Activated CD4-positive, alpha-beta memory T cell treated with anti-CD3 and anti-CD28 coated beads, Interleukin-2, amount 10 ng/mL, durations not matched to agents 7 days and 5 days (primary cell): ENCODE measurements at regions of chr17 and their contacts with region 1.

Region 1: DNA sequence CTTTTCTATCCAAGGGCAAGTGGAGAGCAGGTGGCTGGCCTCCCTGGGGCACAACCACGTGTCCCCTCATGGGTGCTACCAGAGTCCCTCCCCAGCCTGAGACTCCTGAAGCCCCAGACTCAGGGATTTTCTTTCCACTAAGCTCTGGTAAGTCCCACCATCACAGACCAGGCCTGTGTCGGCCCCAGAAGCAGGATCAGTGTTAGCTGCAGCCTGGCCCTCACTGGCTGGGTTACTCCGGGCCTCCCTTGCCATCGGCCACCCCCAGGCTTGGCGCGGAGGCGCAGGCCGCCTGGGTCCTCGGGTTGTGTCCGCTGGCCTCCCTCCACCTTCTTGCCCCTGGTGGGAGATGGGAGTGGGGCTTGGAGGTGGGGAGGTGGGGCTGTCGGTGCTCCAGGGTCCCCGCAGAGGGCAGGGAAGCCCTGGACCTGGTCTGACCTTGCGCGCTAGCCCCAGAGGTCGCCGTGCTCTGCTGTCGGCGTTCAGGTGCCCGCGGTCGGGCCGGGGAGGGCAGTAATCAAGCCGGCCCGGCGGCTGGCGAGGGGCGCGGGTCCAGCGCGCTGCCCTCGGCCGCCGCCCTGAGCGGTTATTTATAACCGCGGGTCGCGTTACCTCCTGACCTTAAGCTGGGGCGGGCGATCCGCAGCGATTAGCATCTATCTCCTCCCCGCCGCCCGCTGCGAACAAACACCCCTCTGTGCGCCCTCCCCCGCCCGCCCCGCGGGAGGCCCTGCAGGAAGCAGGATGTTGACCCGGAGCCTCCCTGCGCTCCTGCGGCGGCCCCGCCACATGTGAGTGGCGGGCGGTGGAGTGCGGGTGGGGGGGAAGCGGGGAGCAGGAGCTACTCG is 78.1 kb upstream of the TOB1 start:
- DNase-seq: peak; percentile 90
- H3K4me3 Mint-ChIP-seq: peak overlapping the region; percentile 74
- H3K27ac Mint-ChIP-seq: peak overlapping the region; percentile 75
- H3K4me1 Mint-ChIP-seq: peaks cover 42% of the 10 kb centered on the region
- H3K27me3 Mint-ChIP-seq: no peaks in the 10 kb centered on the region

Region 2: DNA sequence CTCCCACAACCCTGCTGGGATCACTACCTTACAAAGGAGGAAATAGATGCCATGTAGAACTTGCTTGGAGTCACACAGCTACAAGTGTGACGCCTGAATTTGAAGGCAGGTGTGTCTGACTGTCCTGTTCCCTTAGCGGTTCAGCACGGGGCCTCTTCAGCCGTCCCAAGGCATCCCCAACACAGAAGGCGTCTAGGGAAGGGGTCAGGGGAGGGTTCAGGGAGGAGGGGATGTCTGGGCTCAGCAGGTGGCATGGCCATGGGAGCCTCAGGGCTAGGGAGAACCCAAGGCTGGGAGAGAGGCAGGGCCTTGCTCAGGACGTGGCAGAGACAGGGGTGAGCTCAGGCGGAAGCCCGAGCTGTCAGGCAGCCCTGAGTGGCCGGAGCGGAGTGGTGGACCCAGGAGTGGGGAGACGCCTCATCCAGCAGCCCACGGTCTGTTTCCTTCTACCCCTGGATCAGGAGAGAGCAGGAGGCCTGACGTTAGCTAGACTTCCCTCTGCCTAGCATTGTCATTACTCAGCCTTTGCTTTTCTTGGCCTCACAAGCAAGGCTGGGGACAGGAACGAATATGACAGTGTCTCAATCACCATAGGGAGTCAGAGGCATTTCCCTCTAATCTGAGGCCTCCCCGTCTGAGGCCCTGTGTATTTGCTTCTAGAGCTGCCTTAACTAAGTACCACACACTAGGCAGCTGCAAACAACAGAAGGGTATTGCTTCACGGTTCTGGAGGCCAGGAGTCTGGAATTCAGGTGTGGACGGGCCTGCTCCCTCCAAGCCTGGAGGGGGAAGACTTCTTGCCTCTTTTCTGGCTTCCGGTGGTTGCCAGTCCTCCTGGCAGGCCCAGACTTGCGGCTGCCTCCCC is 145.6 kb before region 1 on chr17:
- CTCF ChIA-PET with region 1: no interaction called
- POLR2A ChIA-PET with region 1: no interaction called
- DNase-seq: no peak
- H3K4me3 Mint-ChIP-seq: no peak overlapping the region
- H3K27ac Mint-ChIP-seq: no peak overlapping the region
- H3K4me1 Mint-ChIP-seq: no peaks in the 10 kb centered on the region
- H3K27me3 Mint-ChIP-seq: peaks cover 5% of the 10 kb centered on the region

Region 3: GRCh38 chr17:50872710-50873424 is 71.4 kb before region 1 on chr17:
- CTCF ChIA-PET with region 1: interaction called, 15 read pairs
- POLR2A ChIA-PET with region 1: interaction called, 457 read pairs
- DNase-seq: peak; percentile 63
- H3K4me3 Mint-ChIP-seq: no peak overlapping the region
- H3K27ac Mint-ChIP-seq: peak overlapping the region; percentile 51
- H3K4me1 Mint-ChIP-seq: peaks cover 54% of the 10 kb centered on the region
- H3K27me3 Mint-ChIP-seq: peaks cover 12% of the 10 kb centered on the region

Region 4: DNA sequence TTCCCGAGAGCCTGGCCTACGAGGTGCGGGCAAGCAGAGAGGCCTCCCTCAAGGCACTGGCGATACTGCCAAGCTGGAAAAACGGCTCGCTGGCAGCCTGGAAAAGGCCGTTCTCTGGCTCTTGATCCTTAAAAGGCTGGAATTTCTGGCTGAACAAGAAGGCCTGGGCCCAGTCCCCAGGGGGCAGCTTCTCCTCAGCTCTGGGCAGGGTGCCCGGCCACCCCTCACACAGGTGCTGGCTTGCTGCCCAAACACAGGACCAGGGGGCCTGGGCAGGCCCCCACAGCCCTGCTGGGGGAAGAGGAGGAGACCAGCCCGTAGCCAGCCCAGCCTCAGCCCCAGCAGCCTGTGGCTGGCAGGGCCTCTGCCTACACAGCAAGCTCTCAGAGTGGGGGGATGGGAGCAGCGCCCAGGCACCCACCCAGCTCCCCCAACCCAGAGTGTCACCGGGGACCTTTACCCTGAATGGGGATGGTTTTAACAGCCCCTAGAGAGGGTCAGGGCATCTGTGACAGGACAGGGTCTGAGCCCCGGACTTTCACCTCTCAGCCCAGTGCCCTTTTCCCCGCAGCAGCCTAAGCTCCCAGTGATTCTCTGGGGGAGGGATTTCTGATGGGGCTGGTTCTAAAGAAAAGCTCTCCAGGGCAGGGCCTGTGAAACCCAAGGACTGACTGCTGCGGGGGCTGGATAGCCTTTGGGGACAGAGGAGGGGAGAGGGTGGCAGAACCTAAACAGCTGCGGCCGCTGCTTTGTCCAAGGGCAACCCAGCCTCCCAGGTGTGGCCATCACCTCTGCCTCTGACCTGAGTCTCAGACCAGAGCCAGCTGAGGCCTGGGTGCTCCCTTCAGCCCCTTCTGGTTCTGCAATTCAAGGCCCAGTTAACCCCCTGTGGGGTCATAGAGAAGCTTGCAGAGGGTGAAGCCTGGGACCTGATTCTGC is 39.5 kb before region 1 on chr17:
- CTCF ChIA-PET with region 1: interaction called, 4 read pairs
- POLR2A ChIA-PET with region 1: interaction called, 21 read pairs
- DNase-seq: no peak
- H3K4me3 Mint-ChIP-seq: no peak overlapping the region
- H3K27ac Mint-ChIP-seq: peak overlapping the region; percentile 85
- H3K4me1 Mint-ChIP-seq: peaks cover 70% of the 10 kb centered on the region
- H3K27me3 Mint-ChIP-seq: no peaks in the 10 kb centered on the region

Region 5: DNA sequence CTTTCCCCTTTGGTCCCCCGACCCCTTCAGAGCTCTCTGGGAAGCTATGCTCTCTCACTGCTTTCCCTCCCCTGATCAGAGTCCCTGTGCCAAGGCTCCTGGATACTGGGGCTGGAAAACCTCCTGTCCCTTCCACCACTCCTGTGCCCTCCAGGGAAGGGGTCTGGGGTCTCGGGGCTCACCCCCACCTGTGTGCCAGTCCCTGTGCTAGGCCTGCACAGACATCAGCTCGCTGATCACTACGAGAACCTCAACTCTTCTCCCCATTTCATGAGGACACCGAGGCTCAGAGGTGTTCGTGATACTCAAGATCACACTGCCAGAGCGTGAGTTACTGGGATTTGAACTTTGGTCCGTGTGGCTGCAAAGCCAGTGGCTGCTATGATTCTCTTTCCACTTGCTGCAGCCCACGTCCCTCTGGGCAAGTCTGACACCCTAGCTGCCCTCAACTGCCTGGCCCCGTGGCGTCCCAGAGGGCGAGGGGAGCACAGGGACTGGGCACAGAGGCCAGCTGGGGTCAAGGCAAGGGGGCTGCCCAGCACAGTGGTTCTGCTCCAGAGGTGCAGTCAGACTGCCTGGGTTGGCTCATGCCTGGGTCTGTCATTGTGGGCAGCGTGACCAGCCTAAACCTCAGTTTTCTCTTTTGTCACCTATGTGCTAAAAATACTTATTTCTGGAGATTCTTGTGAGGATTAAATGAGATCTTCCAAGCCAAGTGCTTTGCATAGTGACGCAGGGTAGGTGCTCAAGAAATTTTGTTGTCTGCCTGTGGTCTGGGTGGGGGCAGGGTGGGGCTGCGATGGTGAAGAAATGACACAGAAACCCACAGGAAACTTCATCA is 34.3 kb before region 1 on chr17:
- CTCF ChIA-PET with region 1: interaction called, 5 read pairs
- POLR2A ChIA-PET with region 1: interaction called, 21 read pairs
- DNase-seq: peak; percentile 90
- H3K4me3 Mint-ChIP-seq: peak overlapping the region; percentile 19
- H3K27ac Mint-ChIP-seq: peak overlapping the region; percentile 97
- H3K4me1 Mint-ChIP-seq: peaks cover 79% of the 10 kb centered on the region
- H3K27me3 Mint-ChIP-seq: no peaks in the 10 kb centered on the region

Region 6: GRCh38 chr17:50931144-50931908 is 13.0 kb before region 1 on chr17:
- CTCF ChIA-PET with region 1: interaction called, 8 read pairs
- POLR2A ChIA-PET with region 1: interaction called, 16 read pairs
- DNase-seq: peak; percentile 53
- H3K4me3 Mint-ChIP-seq: peak overlapping the region; percentile 68
- H3K27ac Mint-ChIP-seq: peak overlapping the region; percentile 47
- H3K4me1 Mint-ChIP-seq: peaks cover 39% of the 10 kb centered on the region
- H3K27me3 Mint-ChIP-seq: peaks cover 23% of the 10 kb centered on the region

Region 7: GRCh38 chr17:51056813-51057510 is 112.7 kb after region 1 on chr17:
- CTCF ChIA-PET with region 1: no interaction called
- POLR2A ChIA-PET with region 1: no interaction called
- DNase-seq: peak; percentile 20
- H3K4me3 Mint-ChIP-seq: no peak overlapping the region
- H3K27ac Mint-ChIP-seq: no peak overlapping the region
- H3K4me1 Mint-ChIP-seq: no peaks in the 10 kb centered on the region
- H3K27me3 Mint-ChIP-seq: no peaks in the 10 kb centered on the region

Region 8: GRCh38 chr17:51132964-51133319 is 188.7 kb after region 1 on chr17:
- CTCF ChIA-PET with region 1: no interaction called
- POLR2A ChIA-PET with region 1: no interaction called
- DNase-seq: no peak
- H3K4me3 Mint-ChIP-seq: no peak overlapping the region
- H3K27ac Mint-ChIP-seq: no peak overlapping the region
- H3K4me1 Mint-ChIP-seq: peaks cover 11% of the 10 kb centered on the region
- H3K27me3 Mint-ChIP-seq: no peaks in the 10 kb centered on the region